Prostate gland (tissue), 2 donors: ENCODE measurements at regions of chr15 and their contacts with region 1.

Region 1: DNA sequence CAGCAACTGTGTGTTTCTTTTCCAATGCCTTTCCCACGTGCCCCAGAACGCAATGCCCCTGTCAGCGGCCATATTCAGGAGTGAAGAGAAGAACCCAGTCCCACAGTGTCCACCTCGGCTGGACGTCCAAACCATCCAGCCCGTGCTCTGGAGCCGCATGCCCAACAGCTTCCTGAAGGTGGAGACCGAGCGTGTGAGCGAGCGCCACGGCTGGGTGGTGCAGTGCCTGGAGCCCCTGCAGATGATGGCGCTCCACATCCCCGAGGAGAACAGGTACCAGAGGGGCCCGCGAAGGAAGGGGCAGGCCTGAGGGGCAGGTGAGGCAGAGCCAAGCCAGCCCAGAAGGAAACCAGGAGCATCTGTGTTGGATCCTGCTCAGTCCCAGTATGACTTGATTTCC is 308.1 kb upstream of the CHRM5 start:
- DNase-seq: no peak
- H3K4me3 ChIP-seq: no peak overlapping the region
- H3K27ac ChIP-seq: no peak overlapping the region
- H3K4me1 ChIP-seq: no peaks in the 10 kb centered on the region
- H3K27me3 ChIP-seq: no peaks in the 10 kb centered on the region
- CTCF ChIP-seq: no peak
- POLR2A ChIP-seq: no peak

Region 2: DNA sequence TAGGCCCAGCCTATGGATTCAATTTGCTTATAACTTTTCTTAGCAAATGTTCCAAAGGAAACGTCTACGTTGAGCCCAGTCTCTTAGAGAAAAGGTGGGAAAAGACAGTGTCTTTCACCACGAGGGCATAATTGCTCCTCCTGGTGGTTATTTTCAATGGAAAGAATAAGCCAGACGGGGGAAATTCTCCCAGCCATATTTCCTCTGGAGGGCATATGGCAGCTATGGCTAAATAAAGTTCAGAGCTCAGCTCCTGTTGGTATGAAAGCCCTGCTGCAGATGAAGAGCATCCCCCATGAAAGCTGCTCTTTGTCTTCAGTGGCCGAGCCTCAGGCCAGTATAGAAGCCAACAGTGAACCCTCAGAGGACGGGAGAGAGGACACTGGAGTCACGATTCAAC is 51.4 kb before region 1 on chr15:
- intact Hi-C with region 1: loop called (anchors 10 kb)
- DNase-seq: no peak
- H3K4me3 ChIP-seq: no peak overlapping the region
- H3K27ac ChIP-seq: no peak overlapping the region
- H3K4me1 ChIP-seq: no peaks in the 10 kb centered on the region
- H3K27me3 ChIP-seq: no peaks in the 10 kb centered on the region
- CTCF ChIP-seq: peak in 2 of 4 experiments; percentile 7 to 19
- POLR2A ChIP-seq: no peak

Region 3: GRCh38 chr15:33735637-33736247 is 75.6 kb after region 1 on chr15:
- intact Hi-C with region 1: no loop called
- DNase-seq: peak; percentile 13
- H3K4me3 ChIP-seq: no peak overlapping the region
- H3K27ac ChIP-seq: no peak overlapping the region
- H3K4me1 ChIP-seq: no peaks in the 10 kb centered on the region
- H3K27me3 ChIP-seq: no peaks in the 10 kb centered on the region
- CTCF ChIP-seq: peak in 2 of 4 experiments; percentile 34 to 48
- POLR2A ChIP-seq: no peak

Region 4: DNA sequence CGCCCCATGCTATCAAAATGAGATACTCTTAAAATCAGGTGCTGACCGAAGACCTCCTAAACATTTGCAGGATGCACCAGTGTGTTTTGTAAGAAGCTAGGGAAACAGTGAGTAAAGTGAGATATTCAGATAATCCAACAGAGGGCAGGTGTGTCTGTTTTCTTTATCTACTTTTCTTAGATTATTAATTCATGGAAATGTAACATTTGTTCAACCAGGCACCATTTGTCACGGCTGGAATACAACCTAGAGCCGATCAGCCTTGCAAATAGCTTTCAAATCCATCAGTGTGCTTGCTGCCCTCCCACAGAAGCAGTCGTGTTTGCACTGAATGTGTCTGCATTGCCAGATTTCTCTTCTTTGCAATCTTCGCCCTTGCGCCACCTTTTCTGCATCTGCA is 106.2 kb after region 1 on chr15:
- intact Hi-C with region 1: no loop called
- DNase-seq: no peak
- H3K4me3 ChIP-seq: no peak overlapping the region
- H3K27ac ChIP-seq: no peak overlapping the region
- H3K4me1 ChIP-seq: no peaks in the 10 kb centered on the region
- H3K27me3 ChIP-seq: no peaks in the 10 kb centered on the region
- CTCF ChIP-seq: no peak
- POLR2A ChIP-seq: no peak